K562 (cell line): ENCODE measurements at regions of chr11 and their contacts with region 1.

Region 1: DNA sequence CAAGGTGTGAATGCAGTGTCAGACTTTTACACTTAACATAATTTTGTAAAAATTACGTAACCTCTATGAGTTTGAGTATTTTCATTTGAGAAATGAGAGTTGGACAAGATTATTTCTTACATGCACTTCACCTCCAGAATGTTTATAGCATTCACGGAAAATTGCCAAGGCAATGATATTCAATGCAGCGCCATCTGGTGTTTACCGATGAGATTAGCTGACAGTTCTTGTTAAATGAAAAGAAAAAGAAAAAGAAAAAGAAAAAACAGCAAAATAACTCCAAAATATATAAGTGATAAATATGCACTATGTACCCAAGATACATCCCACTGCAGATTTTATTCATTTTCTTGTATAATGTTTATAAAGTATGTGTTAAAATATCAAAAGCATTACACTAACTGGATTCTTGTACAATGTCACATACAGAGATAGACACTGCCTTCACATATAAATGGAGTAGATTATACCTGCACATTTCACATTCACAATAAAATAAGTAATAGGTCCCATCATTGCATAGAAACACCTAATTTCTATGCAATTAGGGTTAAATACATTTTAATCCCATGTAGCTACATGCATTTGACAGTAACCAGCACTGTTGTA is 976.3 kb upstream of the FAT3 start:
- DNase-seq: peak in 3 of 4 experiments; percentile 4 to 25 (median 9)
- ATAC-seq: no peak
- H3K4me3 ChIP-seq: no peak overlapping the region
- H3K27ac ChIP-seq: no peak overlapping the region
- H3K4me1 ChIP-seq: no peaks in the 10 kb centered on the region
- H3K27me3 ChIP-seq: no peaks in the 10 kb centered on the region
- CTCF ChIP-seq: peak; percentile 8 to 52 (median 37); a peak in 3 of 6 replicates
- EP300 ChIP-seq: no peak
- POLR2A ChIP-seq: no peak
- RAD21 ChIP-seq: peak; percentile 37 to 54

Region 2: DNA sequence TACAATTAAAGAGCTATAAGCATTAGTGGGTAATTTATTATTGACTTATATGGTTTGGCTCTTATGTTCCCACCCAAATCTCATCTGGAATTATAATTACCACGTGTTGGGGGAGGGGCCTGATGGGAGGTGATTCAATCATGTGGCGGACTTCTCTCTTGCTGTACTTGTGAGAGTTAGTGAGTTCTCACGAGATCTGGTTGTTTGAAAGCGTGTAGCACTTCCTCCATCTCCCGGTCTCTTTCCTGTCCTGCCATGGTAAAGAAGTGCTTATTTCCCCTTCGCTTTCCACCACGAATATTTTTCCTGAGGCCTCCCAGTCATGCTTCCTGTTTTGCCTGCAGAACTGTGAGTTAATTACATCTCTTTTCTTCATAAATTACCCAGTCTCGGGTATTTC is 997.3 kb before region 1 on chr11:
- CTCF ChIA-PET with region 1: no interaction called
- POLR2A ChIA-PET with region 1: no interaction called
- in situ Hi-C with region 1: no loop called
- intact Hi-C with region 1: loop called (anchors 1 kb)
- DNase-seq: no peak
- ATAC-seq: peak; percentile 60
- H3K4me3 ChIP-seq: no peak overlapping the region
- H3K27ac ChIP-seq: no peak overlapping the region
- H3K4me1 ChIP-seq: peaks cover 0 to 5% of the 10 kb centered on the region in 2 experiments; a peak in 2 of 5 replicates
- H3K27me3 ChIP-seq: peaks cover 0 to under 1% of the 10 kb centered on the region in 2 experiments; a peak in 1 of 5 replicates
- CTCF ChIP-seq: no peak
- EP300 ChIP-seq: no peak
- POLR2A ChIP-seq: no peak
- RAD21 ChIP-seq: no peak